ENCODE measurements at regions of chr6 and their contacts with region 1.

Region 1: GRCh38 chr6:134174672-134175198 is 122.3 kb upstream of the SLC2A12 start:
- DNase-seq: peak; percentile 86
- ATAC-seq: peak; percentile 72
- H3K4me3 ChIP-seq: peak overlapping the region; percentile 95
- H3K27ac ChIP-seq: peak overlapping the region; percentile 87
- H3K4me1 ChIP-seq: peaks cover 7% of the 10 kb centered on the region; the same call in 1 of the 2 replicates
- H3K27me3 ChIP-seq: no peaks in the 10 kb centered on the region
- CTCF ChIP-seq: no peak

Region 2: GRCh38 chr6:134295953-134296553 is 121.3 kb after region 1 on chr6:
- CTCF ChIA-PET with region 1: no interaction called
- POLR2A ChIA-PET with region 1: no interaction called
- intact Hi-C with region 1: loop called (anchors 10 kb)
- DNase-seq: peak; percentile 87
- ATAC-seq: peak; percentile 89
- H3K4me3 ChIP-seq: no peak overlapping the region
- H3K27ac ChIP-seq: peak overlapping the region; percentile 47
- H3K4me1 ChIP-seq: peaks cover 13% of the 10 kb centered on the region
- H3K27me3 ChIP-seq: no peaks in the 10 kb centered on the region
- CTCF ChIP-seq: no peak

Region 3: GRCh38 chr6:134436281-134436815 is 261.6 kb after region 1 on chr6:
- CTCF ChIA-PET with region 1: no interaction called
- POLR2A ChIA-PET with region 1: interaction called, 4 read pairs
- intact Hi-C with region 1: loop called (anchors 1 kb)
- DNase-seq: peak; percentile 90
- ATAC-seq: peak; percentile 97
- H3K4me3 ChIP-seq: peak overlapping the region; percentile 47
- H3K27ac ChIP-seq: peak overlapping the region; percentile 93
- H3K4me1 ChIP-seq: peaks cover 28% of the 10 kb centered on the region
- H3K27me3 ChIP-seq: no peaks in the 10 kb centered on the region
- CTCF ChIP-seq: no peak

Region 4: GRCh38 chr6:134640975-134641429 is 466.3 kb after region 1 on chr6:
- CTCF ChIA-PET with region 1: interaction called, 3 read pairs
- POLR2A ChIA-PET with region 1: interaction called, 7 read pairs
- intact Hi-C with region 1: loop called (anchors 1 kb)
- DNase-seq: peak; percentile 86
- ATAC-seq: peak; percentile 70
- H3K4me3 ChIP-seq: no peak overlapping the region
- H3K27ac ChIP-seq: no peak overlapping the region
- H3K4me1 ChIP-seq: peaks cover 22% of the 10 kb centered on the region
- H3K27me3 ChIP-seq: no peaks in the 10 kb centered on the region
- CTCF ChIP-seq: peak; percentile 86

Region 5: GRCh38 chr6:134882426-134883038 is 707.8 kb after region 1 on chr6:
- CTCF ChIA-PET with region 1: no interaction called
- POLR2A ChIA-PET with region 1: no interaction called
- intact Hi-C with region 1: loop called (anchors 5 kb)
- DNase-seq: peak; percentile 70
- ATAC-seq: peak; percentile 56
- H3K4me3 ChIP-seq: no peak overlapping the region
- H3K27ac ChIP-seq: no peak overlapping the region
- H3K4me1 ChIP-seq: no peaks in the 10 kb centered on the region
- H3K27me3 ChIP-seq: no peaks in the 10 kb centered on the region
- CTCF ChIP-seq: peak; percentile 91